ENCODE measurements at regions of chr6 and their contacts with region 1.

Region 1: GRCh38 chr6:16514249-16514648 is 247.0 kb downstream of the ATXN1 start:
- DNase-seq: no peak
- ATAC-seq: peak; percentile 64
- H3K4me3 Mint-ChIP-seq: no peak overlapping the region
- H3K27ac Mint-ChIP-seq: peak overlapping the region; percentile 42
- H3K4me1 Mint-ChIP-seq: peaks cover 39% of the 10 kb centered on the region
- H3K27me3 Mint-ChIP-seq: no peaks in the 10 kb centered on the region
- CTCF ChIP-seq: no peak

Region 2: DNA sequence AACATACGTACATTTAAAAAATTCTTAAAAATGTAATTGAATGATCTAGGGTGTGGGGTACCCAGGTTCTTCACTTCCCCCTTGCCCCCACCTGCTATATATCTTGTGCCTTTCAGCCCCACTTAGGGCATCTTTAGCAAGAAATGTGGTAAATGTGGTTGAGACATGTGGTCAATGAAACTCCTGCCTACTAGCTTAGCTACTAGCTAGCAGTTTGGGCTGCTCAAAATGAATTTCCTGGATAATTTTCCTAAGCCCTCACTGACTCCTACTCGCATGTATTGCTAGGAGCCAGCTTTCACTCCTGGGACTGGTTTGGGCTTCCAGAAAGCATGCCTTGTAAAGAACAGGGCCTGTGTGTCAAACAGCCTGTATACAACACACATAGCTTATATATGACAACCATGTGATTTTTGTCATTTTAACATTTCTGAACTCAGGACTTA is 10.3 kb before region 1 on chr6:
- CTCF ChIA-PET with region 1: interaction called, 10 read pairs
- POLR2A ChIA-PET with region 1: no interaction called
- DNase-seq: no peak
- ATAC-seq: no peak
- H3K4me3 Mint-ChIP-seq: no peak overlapping the region
- H3K27ac Mint-ChIP-seq: no peak overlapping the region
- H3K4me1 Mint-ChIP-seq: peaks cover 6% of the 10 kb centered on the region
- H3K27me3 Mint-ChIP-seq: no peaks in the 10 kb centered on the region
- CTCF ChIP-seq: no peak

Region 3: GRCh38 chr6:16625291-16626265 is 111.3 kb after region 1 on chr6:
- CTCF ChIA-PET with region 1: no interaction called
- POLR2A ChIA-PET with region 1: no interaction called
- DNase-seq: no peak
- ATAC-seq: no peak
- H3K4me3 Mint-ChIP-seq: no peak overlapping the region
- H3K27ac Mint-ChIP-seq: no peak overlapping the region
- H3K4me1 Mint-ChIP-seq: peaks cover 4% of the 10 kb centered on the region; the same call in 1 of the 2 replicates
- H3K27me3 Mint-ChIP-seq: no peaks in the 10 kb centered on the region
- CTCF ChIP-seq: no peak